Left ventricle myocardium inferior (tissue), 1 donor: ENCODE measurements at regions of chr5 and their contacts with region 1.

Region 1: GRCh38 chr5:58886315-58887207 is 303.7 kb downstream of the RAB3C start:
- DNase-seq: peak; percentile 42
- H3K4me3 ChIP-seq: no peak overlapping the region
- H3K27ac ChIP-seq: peak overlapping the region; percentile 54
- H3K4me1 ChIP-seq: peaks cover 17% of the 10 kb centered on the region
- H3K27me3 ChIP-seq: no peaks in the 10 kb centered on the region
- CTCF ChIP-seq: peak; percentile 93

Region 2: GRCh38 chr5:59007460-59008063 is 121.0 kb after region 1 on chr5:
- intact Hi-C with region 1: loop called (anchors 5 kb)
- DNase-seq: no peak
- H3K4me3 ChIP-seq: no peak overlapping the region
- H3K27ac ChIP-seq: no peak overlapping the region
- H3K4me1 ChIP-seq: peaks cover 30% of the 10 kb centered on the region
- H3K27me3 ChIP-seq: no peaks in the 10 kb centered on the region
- CTCF ChIP-seq: peak; percentile 60

Region 3: DNA sequence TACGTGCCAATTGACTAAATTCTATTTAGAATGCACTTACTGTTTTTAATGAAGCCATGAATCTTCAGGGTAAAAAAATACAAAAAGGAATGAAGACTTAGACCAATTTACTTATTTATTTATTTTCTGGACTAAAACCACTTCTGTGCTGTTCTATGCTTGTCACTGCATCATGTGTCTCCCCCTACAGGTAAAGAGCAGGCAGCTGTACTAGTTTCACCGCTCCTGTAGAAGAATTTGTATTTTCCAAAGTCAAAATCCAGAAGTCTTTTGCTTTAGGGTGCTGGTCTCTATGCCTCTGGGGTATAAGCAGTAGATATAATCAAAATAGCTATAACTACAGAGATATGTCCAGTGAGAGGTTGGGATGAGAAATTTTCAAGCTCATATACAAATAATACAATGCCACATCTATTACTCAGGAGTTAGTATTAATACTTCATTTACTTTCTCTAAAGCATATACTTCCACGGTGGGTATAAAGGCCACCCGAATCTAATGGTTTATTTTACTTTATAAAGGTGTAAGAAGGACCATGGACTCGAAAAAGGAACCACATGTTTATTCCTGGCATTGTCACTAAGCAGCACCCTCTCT is 287.8 kb after region 1 on chr5:
- intact Hi-C with region 1: loop called (anchors 5 kb)
- DNase-seq: no peak
- H3K4me3 ChIP-seq: no peak overlapping the region
- H3K27ac ChIP-seq: no peak overlapping the region
- H3K4me1 ChIP-seq: peaks cover 17% of the 10 kb centered on the region
- H3K27me3 ChIP-seq: no peaks in the 10 kb centered on the region
- CTCF ChIP-seq: peak; percentile 87

Region 4: DNA sequence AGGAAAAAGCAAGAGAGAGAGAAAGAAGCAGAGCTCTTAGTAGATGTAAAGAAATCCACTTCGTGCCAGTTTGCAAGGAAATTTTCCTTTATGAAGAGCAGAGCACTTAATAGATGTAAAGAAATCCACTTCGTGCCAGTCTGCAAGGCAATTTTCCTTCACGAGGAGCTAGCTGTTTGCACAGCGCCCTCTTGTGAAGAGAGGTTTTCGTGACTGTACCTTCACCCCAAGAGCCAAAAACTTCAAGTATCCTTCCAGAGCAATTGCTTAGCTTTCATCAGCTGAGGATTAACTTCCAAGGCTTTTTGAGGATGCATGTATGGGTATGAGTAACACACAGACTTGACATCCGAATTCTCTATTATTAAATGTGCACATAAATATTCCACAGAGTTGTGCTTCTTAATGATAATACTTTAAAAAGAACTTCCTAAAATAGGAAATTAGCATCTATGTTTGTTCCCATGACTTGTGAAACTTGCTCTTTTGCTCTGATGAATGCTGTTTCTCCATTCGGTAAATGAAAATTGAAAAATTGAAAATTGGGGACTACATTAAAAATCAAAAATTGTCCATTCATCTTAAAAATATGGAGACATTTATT is 481.3 kb after region 1 on chr5:
- intact Hi-C with region 1: loop called (anchors 10 kb)
- DNase-seq: peak; percentile 26
- H3K4me3 ChIP-seq: no peak overlapping the region
- H3K27ac ChIP-seq: no peak overlapping the region
- H3K4me1 ChIP-seq: peaks cover 9% of the 10 kb centered on the region
- H3K27me3 ChIP-seq: no peaks in the 10 kb centered on the region
- CTCF ChIP-seq: peak; percentile 86